HepG2 (cell line): ENCODE measurements at regions of chr14 and their contacts with region 1.

Region 1: GRCh38 chr14:81220830-81221578 is at the start of gene GTF2A1:
- DNase-seq: peak; percentile 88
- ATAC-seq: peak; percentile 85
- H3K4me3 ChIP-seq: peak within 1 kb of the TSS; percentile 84 to 98 (median 86)
- H3K27ac ChIP-seq: peak within 1 kb of the TSS; percentile 100
- H3K4me1 ChIP-seq: peaks cover 36% of the 10 kb centered on the region
- H3K27me3 ChIP-seq: no peaks in the 10 kb centered on the region
- CTCF ChIP-seq: no peak
- EP300 ChIP-seq: peak in 1 of 2 experiments; percentile 48; a peak in 2 of 4 replicates
- POLR2A ChIP-seq: peak; percentile 86 to 89
- RAD21 ChIP-seq: 0 out of 2 replicates have a peak, but pooled peaks have one; percentile 37
- total RNA-seq, gene GTF2A1: 17.5 and 30.1 TPM in 2 replicates

Region 2: GRCh38 chr14:81164167-81164774 is 56.7 kb before region 1 on chr14:
- CTCF ChIA-PET with region 1: no interaction called
- POLR2A ChIA-PET with region 1: interaction called, 20 read pairs
- in situ Hi-C with region 1: no loop called
- intact Hi-C with region 1: loop called (anchors 2 kb)
- DNase-seq: peak; percentile 78
- ATAC-seq: peak; percentile 94
- H3K4me3 ChIP-seq: no peak overlapping the region; a peak in 1 of 6 replicates
- H3K27ac ChIP-seq: no peak overlapping the region
- H3K4me1 ChIP-seq: peaks cover 45% of the 10 kb centered on the region
- H3K27me3 ChIP-seq: no peaks in the 10 kb centered on the region
- CTCF ChIP-seq: peak; percentile 90
- EP300 ChIP-seq: no peak
- POLR2A ChIP-seq: no peak
- RAD21 ChIP-seq: peak; percentile 57

Region 3: DNA sequence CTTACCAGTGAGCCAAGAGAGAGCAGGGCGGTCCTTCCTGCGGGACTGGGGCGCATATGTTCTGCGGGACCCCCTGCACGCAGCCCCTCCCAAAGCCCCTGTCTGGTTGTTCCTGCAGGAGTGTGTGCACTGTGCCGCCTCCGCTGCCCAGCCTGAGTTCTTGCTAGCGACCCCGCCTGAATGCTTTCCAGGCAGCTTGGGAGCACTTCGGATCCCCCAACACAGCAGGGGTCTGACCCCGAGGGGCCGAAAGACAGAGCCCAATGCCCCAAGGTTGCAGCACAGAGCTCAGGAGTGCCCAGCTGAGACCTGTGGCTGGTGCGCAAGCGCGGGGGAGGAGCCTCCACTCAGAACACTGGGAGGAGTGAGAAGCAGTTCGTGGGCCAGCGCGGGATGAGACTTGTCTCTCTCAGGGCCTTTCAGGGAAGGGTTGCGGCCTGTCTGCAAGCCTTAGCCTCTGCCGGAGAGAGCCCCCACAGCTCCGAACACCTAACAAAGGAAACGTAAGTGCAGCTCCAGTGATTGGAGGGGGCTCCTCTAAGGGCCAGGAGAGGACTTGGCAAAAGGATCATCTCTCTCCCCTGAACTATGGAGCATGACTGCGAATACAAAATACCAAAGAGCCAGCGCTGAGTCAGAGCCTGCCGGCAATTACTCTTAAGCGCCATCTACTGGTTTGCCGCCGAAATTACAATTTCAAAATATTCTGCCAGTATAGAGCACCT is 50.7 kb before region 1 on chr14:
- CTCF ChIA-PET with region 1: no interaction called
- POLR2A ChIA-PET with region 1: interaction called, 20 read pairs
- in situ Hi-C with region 1: no loop called
- intact Hi-C with region 1: loop called (anchors 2 kb)
- DNase-seq: peak; percentile 84
- ATAC-seq: peak; percentile 98
- H3K4me3 ChIP-seq: peak overlapping the region; percentile 68 to 87 (median 80)
- H3K27ac ChIP-seq: peak overlapping the region; percentile 91
- H3K4me1 ChIP-seq: peaks cover 29% of the 10 kb centered on the region
- H3K27me3 ChIP-seq: no peaks in the 10 kb centered on the region
- CTCF ChIP-seq: peak; percentile 84
- EP300 ChIP-seq: no peak
- POLR2A ChIP-seq: peak; percentile 94 to 96
- RAD21 ChIP-seq: peak; percentile 69

Region 4: GRCh38 chr14:81256289-81256960 is 35.4 kb after region 1 on chr14:
- CTCF ChIA-PET with region 1: no interaction called
- POLR2A ChIA-PET with region 1: no interaction called
- in situ Hi-C with region 1: no loop called
- intact Hi-C with region 1: no loop called
- DNase-seq: no peak
- ATAC-seq: no peak
- H3K4me3 ChIP-seq: no peak overlapping the region
- H3K27ac ChIP-seq: no peak overlapping the region
- H3K4me1 ChIP-seq: no peaks in the 10 kb centered on the region
- H3K27me3 ChIP-seq: no peaks in the 10 kb centered on the region
- CTCF ChIP-seq: no peak
- EP300 ChIP-seq: no peak
- POLR2A ChIP-seq: no peak
- RAD21 ChIP-seq: no peak

Region 5: DNA sequence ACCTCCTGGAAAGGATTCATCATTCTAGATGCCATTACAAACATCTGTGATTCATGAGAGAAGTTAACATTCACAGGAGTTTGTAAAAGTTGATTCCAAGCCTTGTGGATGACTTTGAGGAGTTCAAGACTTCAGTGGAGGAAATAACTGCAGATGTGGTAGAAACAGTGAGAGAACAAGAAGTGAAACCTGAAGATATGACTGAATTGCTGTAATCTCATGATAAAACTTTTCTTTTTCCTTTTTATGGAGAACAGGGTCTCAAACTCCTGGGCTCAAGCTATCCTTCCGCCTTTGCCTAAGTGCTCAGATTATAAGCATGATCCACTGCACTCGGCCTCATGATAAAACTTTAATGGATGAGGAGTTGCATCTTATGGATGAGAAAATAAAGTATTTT is 64.2 kb after region 1 on chr14:
- CTCF ChIA-PET with region 1: no interaction called
- POLR2A ChIA-PET with region 1: no interaction called
- in situ Hi-C with region 1: no loop called
- intact Hi-C with region 1: no loop called
- DNase-seq: no peak
- ATAC-seq: no peak
- H3K4me3 ChIP-seq: no peak overlapping the region
- H3K27ac ChIP-seq: no peak overlapping the region
- H3K4me1 ChIP-seq: no peaks in the 10 kb centered on the region
- H3K27me3 ChIP-seq: no peaks in the 10 kb centered on the region
- CTCF ChIP-seq: no peak
- EP300 ChIP-seq: no peak
- POLR2A ChIP-seq: no peak
- RAD21 ChIP-seq: no peak

Region 6: GRCh38 chr14:81303248-81304221 is 82.5 kb after region 1 on chr14:
- CTCF ChIA-PET with region 1: no interaction called
- POLR2A ChIA-PET with region 1: interaction called, 10 read pairs
- in situ Hi-C with region 1: no loop called
- intact Hi-C with region 1: loop called (anchors 1 kb)
- DNase-seq: peak; percentile 98
- ATAC-seq: peak; percentile 97
- H3K4me3 ChIP-seq: peak overlapping the region; percentile 26 to 51 (median 39); a peak in 4 of 6 replicates
- H3K27ac ChIP-seq: peak overlapping the region; percentile 91
- H3K4me1 ChIP-seq: peaks cover 42% of the 10 kb centered on the region
- H3K27me3 ChIP-seq: no peaks in the 10 kb centered on the region
- CTCF ChIP-seq: no peak
- EP300 ChIP-seq: peak; percentile 61 to 91; a peak in 3 of 4 replicates
- POLR2A ChIP-seq: peak in 1 of 2 experiments; percentile 55; a peak in 1 of 4 replicates
- RAD21 ChIP-seq: no peak; the same call in 1 of the 2 replicates

Region 7: GRCh38 chr14:81436296-81437138 is 215.5 kb after region 1 on chr14:
- CTCF ChIA-PET with region 1: no interaction called
- POLR2A ChIA-PET with region 1: interaction called, 14 read pairs
- in situ Hi-C with region 1: no loop called
- intact Hi-C with region 1: no loop called
- DNase-seq: peak; percentile 54
- ATAC-seq: peak; percentile 93
- H3K4me3 ChIP-seq: peak overlapping the region; percentile 48 to 84 (median 71)
- H3K27ac ChIP-seq: no peak overlapping the region
- H3K4me1 ChIP-seq: peaks cover 22% of the 10 kb centered on the region
- H3K27me3 ChIP-seq: no peaks in the 10 kb centered on the region; a peak in 2 of 5 replicates
- CTCF ChIP-seq: no peak
- EP300 ChIP-seq: no peak
- POLR2A ChIP-seq: peak in 1 of 2 experiments; percentile 50; a peak in 2 of 4 replicates
- RAD21 ChIP-seq: 0 out of 2 replicates have a peak, but pooled peaks have one; percentile 42

Region 8: DNA sequence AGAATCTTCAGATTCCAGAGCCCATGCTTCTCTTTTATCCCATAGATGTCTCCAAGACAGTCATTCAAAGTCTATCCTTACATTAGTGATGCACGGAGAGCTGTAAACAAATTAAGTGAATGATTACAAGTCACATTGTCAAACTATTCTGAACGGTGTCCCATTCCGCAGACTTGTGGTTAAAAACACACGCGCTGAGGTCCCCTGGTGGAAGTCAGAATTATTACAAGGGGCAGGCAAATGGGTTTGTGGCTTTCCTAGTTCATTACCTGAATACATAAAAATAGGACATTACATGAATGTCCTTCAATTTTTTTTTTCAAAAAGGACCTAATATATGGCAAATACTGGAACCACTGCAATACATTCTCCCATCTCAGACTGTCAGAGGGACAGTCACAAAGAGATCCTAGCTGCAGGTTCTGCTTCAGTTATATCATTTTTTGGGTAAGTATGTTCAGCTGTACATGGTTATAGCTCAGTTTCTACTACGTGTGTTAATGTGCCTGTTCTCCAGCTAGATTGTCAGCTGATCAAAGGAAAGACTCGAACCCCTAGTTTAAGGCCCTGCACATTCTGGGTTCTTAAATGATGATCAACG is 232.3 kb after region 1 on chr14:
- CTCF ChIA-PET with region 1: no interaction called
- POLR2A ChIA-PET with region 1: no interaction called
- in situ Hi-C with region 1: no loop called
- intact Hi-C with region 1: loop called (anchors 5 kb)
- DNase-seq: peak; percentile 47
- ATAC-seq: peak; percentile 74
- H3K4me3 ChIP-seq: peak overlapping the region in 2 of 3 experiments; percentile 32 to 42; a peak in 3 of 6 replicates
- H3K27ac ChIP-seq: no peak overlapping the region
- H3K4me1 ChIP-seq: peaks cover 43% of the 10 kb centered on the region
- H3K27me3 ChIP-seq: no peaks in the 10 kb centered on the region
- CTCF ChIP-seq: peak; percentile 83
- EP300 ChIP-seq: no peak
- POLR2A ChIP-seq: no peak
- RAD21 ChIP-seq: peak; percentile 83

Region 9: DNA sequence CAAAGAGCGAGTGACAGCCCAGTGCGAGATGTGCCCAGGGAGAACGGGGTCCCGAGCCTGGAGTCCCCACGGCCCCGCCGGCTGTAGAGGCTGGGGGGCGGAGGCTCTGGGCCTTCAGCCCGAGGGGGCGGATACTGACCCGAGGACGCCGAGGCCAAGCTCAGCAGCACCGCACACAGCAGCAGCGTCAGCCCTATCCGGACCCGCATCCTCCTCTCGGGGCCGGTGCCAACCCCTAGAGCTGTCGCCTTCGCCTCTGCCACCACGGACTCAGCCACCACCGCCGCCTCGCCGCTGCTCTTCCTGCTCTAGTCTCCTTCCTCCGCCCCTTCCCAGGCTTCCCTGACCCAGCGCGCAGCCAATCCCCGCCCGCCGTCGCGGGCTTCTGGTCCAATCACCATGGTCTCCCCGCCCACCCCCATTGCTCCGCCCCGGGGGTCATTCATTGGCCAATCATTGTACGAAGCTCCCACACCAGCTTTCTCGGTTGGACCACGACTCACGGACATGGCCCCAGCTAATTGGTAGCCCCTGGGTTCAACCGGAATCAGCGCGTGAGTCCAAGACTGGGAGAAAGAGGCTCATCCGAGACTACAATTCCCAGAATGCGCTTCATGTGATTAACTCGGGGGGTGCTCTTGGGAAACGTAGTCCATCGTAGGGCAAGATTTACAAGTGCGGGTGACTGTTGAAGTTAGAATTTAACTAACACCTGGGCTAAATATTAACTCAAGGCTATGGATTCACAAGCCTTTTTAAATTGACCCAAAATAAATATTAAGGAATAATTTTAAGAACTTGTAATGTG is 312.7 kb after region 1 on chr14 and contains the start of gene SEL1L:
- CTCF ChIA-PET with region 1: no interaction called
- POLR2A ChIA-PET with region 1: interaction called, 12 read pairs
- in situ Hi-C with region 1: no loop called
- intact Hi-C with region 1: loop called (anchors 5 kb)
- DNase-seq: peak; percentile 100
- ATAC-seq: peak; percentile 97
- H3K4me3 ChIP-seq: peak within 1 kb of the TSS; percentile 80 to 99 (median 83)
- H3K27ac ChIP-seq: peak within 1 kb of the TSS; percentile 72
- H3K4me1 ChIP-seq: peaks cover 73% of the 10 kb centered on the region
- H3K27me3 ChIP-seq: no peaks in the 10 kb centered on the region; a peak in 1 of 5 replicates
- CTCF ChIP-seq: no peak
- EP300 ChIP-seq: 0 out of 4 replicates have a peak, but pooled peaks of 1 of the 2 experiments have one; percentile 22
- POLR2A ChIP-seq: peak; percentile 93 to 95
- RAD21 ChIP-seq: peak; percentile 55; the same call in 1 of the 2 replicates
- total RNA-seq, gene SEL1L: 38.1 and 61.0 TPM in 2 replicates